AG04450 (cell line): ENCODE measurements at regions of chr2 and their contacts with region 1.

Region 1: GRCh38 chr2:102753563-102754159 is 8.2 kb upstream of the TMEM182 start:
- DNase-seq: no peak
- H3K4me3 ChIP-seq: no peak overlapping the region
- H3K27ac ChIP-seq: no peak overlapping the region
- H3K27me3 ChIP-seq: no peaks in the 10 kb centered on the region
- CTCF ChIP-seq: peak; percentile 74

Region 2: DNA sequence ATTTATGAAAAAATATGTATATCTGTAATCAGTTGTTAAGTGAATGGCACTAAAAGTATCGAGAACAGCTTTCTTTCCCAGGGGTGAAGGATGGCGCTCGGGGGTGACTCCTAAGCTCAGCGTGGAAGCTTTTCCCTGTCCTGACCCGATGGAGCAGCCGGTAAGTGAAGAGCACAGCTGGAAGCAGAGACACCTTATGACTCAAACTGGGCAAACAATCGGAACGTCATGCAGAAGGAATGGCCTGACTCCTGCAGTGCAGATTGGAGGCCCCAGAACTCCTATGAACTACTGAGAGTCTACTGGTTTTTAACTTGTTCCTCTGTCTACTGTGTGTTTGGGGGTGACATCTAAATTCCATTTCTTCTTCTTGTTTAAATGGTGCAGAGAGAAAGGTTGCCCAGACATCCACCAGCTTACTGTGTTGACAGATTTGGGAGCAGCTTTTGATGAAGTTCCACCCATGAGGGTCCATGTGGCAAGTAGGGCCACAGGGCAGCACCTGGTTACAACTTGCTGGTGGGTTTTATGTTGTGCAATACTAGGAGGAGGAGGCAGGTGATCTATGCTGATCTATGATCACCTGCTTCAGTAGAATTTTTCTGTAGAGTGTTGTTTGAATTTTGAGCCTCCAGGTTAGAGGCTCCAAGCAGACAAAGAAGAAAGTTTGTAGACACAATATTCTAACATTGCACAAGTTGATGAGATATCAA is 44.7 kb before region 1 on chr2:
- CTCF ChIA-PET with region 1: interaction called, 14 read pairs
- POLR2A ChIA-PET with region 1: no interaction called
- DNase-seq: no peak
- H3K4me3 ChIP-seq: no peak overlapping the region
- H3K27ac ChIP-seq: no peak overlapping the region
- H3K27me3 ChIP-seq: peaks cover 3% of the 10 kb centered on the region
- CTCF ChIP-seq: no peak

Region 3: GRCh38 chr2:102736410-102737409 is 17.0 kb before region 1 on chr2:
- CTCF ChIA-PET with region 1: interaction called, 134 read pairs
- POLR2A ChIA-PET with region 1: no interaction called
- DNase-seq: no peak
- H3K4me3 ChIP-seq: peak overlapping the region; percentile 84
- H3K27ac ChIP-seq: no peak overlapping the region
- H3K27me3 ChIP-seq: no peaks in the 10 kb centered on the region
- CTCF ChIP-seq: peak; percentile 31; the same call in 1 of the 2 replicates

Region 4: DNA sequence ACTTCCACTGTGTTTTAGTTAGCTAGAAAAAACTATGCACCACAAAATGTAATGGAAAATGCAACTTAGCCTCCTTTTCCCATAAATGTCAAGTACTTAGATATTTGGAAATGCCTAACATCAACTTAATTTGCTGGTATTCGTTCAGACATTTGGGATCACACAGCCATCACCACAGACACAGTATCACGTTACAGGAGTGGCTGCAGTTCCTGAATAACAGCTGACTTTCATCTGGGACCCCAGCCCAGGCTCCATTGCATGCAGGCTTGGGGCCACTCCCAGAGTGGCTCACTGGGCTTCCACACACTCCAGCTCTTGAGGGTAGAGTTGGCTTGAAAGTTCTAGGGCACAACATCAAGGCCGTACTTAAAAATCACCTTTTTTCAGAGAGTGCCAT is 17.5 kb after region 1 on chr2:
- CTCF ChIA-PET with region 1: interaction called, 130 read pairs
- POLR2A ChIA-PET with region 1: no interaction called
- DNase-seq: no peak
- H3K4me3 ChIP-seq: no peak overlapping the region
- H3K27ac ChIP-seq: no peak overlapping the region
- H3K27me3 ChIP-seq: no peaks in the 10 kb centered on the region
- CTCF ChIP-seq: no peak

Region 5: DNA sequence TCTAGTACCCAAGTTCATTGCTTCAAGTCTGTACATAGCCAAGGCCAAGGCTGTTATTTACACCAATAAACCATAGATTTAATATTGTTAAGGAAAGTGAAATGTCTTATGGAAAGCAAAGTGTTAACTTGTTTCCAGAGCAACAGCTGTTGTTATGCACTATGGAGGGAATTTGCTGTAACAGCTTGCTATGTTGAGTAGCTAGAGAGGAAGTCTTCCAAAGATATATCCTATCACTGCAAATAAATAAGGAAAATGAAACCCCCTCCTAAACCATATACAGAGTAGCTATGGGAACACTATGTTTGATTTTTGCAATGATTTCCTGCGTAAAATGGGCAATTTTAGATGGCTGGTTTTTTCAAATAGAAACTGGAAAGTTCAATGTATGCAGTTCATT is 29.3 kb after region 1 on chr2:
- CTCF ChIA-PET with region 1: interaction called, 22 read pairs
- POLR2A ChIA-PET with region 1: no interaction called
- DNase-seq: no peak
- H3K4me3 ChIP-seq: no peak overlapping the region
- H3K27ac ChIP-seq: no peak overlapping the region
- H3K27me3 ChIP-seq: no peaks in the 10 kb centered on the region
- CTCF ChIP-seq: no peak

Region 6: GRCh38 chr2:102788885-102789260 is 35.2 kb after region 1 on chr2:
- CTCF ChIA-PET with region 1: interaction called, 40 read pairs
- POLR2A ChIA-PET with region 1: no interaction called
- DNase-seq: no peak
- H3K4me3 ChIP-seq: no peak overlapping the region
- H3K27ac ChIP-seq: no peak overlapping the region
- H3K27me3 ChIP-seq: peaks cover 3% of the 10 kb centered on the region
- CTCF ChIP-seq: no peak

Region 7: GRCh38 chr2:102801098-102801718 is 47.5 kb after region 1 on chr2:
- CTCF ChIA-PET with region 1: interaction called, 189 read pairs
- POLR2A ChIA-PET with region 1: no interaction called
- DNase-seq: no peak
- H3K4me3 ChIP-seq: no peak overlapping the region
- H3K27ac ChIP-seq: no peak overlapping the region
- H3K27me3 ChIP-seq: no peaks in the 10 kb centered on the region
- CTCF ChIP-seq: no peak